MCF 10A (cell line): ENCODE measurements at regions of chr10 and their contacts with region 1.

Region 1: GRCh38 chr10:132904181-132904819 is 38.1 kb downstream of the CFAP46 start:
- DNase-seq: peak; percentile 64
- H3K4me3 Mint-ChIP-seq: peak overlapping the region; percentile 77
- H3K27ac Mint-ChIP-seq: peak overlapping the region; percentile 86
- H3K4me1 Mint-ChIP-seq: peaks cover 22% of the 10 kb centered on the region
- H3K27me3 Mint-ChIP-seq: no peaks in the 10 kb centered on the region
- CTCF ChIP-seq: peak; percentile 96

Region 2: DNA sequence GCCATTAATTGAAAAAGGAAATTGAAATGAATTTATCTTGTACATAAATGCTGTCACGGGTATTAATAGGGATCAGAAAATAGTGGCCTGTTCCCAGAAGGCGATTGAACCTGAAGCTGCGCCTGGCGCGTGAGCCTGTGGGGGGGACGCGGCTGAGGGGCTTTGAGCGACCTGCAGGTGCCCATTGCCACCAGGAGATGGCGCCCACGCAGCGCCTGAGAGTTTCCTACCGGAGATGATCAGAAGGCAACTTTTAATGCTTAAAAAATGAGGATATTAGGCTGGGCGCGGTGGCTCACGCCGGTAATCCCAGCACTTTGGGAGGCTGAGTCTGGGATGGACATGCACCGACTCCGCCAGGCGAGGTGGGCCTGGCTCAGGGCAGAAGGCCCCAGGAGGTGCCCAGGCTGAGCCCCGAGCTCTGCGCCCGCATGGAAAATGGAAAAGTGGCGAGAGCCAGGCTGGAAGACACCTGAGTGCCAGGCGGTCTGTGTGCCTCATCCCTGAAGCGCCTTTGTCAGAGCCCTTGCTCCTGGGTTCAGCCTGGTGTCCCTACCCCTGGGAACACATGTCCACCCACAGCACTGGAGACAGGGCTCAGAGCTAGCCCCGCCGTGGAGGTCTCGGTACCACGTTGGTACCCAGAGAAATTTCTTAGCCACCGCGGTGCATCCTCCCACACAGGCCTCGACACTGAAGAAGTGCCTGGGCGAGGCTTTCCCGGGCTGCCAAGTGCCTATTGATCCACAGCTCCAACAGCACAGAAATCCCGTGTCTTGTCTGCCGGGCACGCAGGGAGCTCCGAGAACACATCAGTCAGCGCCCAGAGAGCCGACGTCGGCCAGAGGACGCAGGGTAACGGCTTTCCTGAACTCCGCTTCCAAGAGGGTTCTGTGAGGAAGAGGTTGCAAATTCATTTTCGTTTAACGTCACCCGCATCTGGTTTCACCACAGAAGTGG is 249.3 kb before region 1 on chr10:
- CTCF ChIA-PET with region 1: interaction called, 3 read pairs
- POLR2A ChIA-PET with region 1: no interaction called
- intact Hi-C with region 1: loop called (anchors 1 kb)
- DNase-seq: peak; percentile 58
- H3K4me3 Mint-ChIP-seq: no peak overlapping the region
- H3K27ac Mint-ChIP-seq: no peak overlapping the region
- H3K4me1 Mint-ChIP-seq: no peaks in the 10 kb centered on the region
- H3K27me3 Mint-ChIP-seq: no peaks in the 10 kb centered on the region
- CTCF ChIP-seq: peak; percentile 97

Region 3: GRCh38 chr10:132836832-132837540 is 67.3 kb before region 1 on chr10:
- CTCF ChIA-PET with region 1: interaction called, 7 read pairs
- POLR2A ChIA-PET with region 1: no interaction called
- intact Hi-C with region 1: loop called (anchors 2 kb)
- DNase-seq: peak; percentile 10
- H3K4me3 Mint-ChIP-seq: no peak overlapping the region
- H3K27ac Mint-ChIP-seq: no peak overlapping the region
- H3K4me1 Mint-ChIP-seq: no peaks in the 10 kb centered on the region
- H3K27me3 Mint-ChIP-seq: peaks cover 35% of the 10 kb centered on the region
- CTCF ChIP-seq: peak; percentile 95

Region 4: DNA sequence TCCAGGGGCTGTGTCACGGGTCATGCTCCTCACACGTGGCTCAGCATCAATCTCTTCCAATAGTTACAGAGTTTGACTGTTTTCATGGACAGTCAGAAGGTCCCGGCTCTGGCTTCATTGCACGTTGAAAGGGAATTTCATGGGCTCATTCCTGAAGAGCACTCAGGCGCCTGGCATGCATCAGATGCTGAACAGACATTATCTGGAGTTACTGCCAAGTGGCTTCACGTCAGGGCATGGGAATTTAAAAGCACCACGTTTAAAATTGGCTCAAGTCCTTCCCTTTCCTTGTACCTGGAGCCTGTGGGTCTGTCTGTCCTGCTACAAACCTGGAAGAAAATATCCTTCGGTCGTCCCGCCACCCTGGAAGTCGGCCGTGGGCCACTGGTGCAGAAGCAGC is 12.3 kb before region 1 on chr10:
- CTCF ChIA-PET with region 1: interaction called, 12 read pairs
- POLR2A ChIA-PET with region 1: interaction called, 3 read pairs
- intact Hi-C with region 1: no loop called
- DNase-seq: no peak
- H3K4me3 Mint-ChIP-seq: no peak overlapping the region
- H3K27ac Mint-ChIP-seq: no peak overlapping the region
- H3K4me1 Mint-ChIP-seq: no peaks in the 10 kb centered on the region
- H3K27me3 Mint-ChIP-seq: peaks cover 51% of the 10 kb centered on the region
- CTCF ChIP-seq: no peak

Region 5: GRCh38 chr10:133000648-133001047 is 96.3 kb after region 1 on chr10:
- CTCF ChIA-PET with region 1: no interaction called
- POLR2A ChIA-PET with region 1: no interaction called
- intact Hi-C with region 1: no loop called
- DNase-seq: no peak
- H3K4me3 Mint-ChIP-seq: no peak overlapping the region
- H3K27ac Mint-ChIP-seq: no peak overlapping the region
- H3K4me1 Mint-ChIP-seq: no peaks in the 10 kb centered on the region
- H3K27me3 Mint-ChIP-seq: peaks cover 16% of the 10 kb centered on the region
- CTCF ChIP-seq: no peak

Region 6: GRCh38 chr10:133257489-133258065 is 353.3 kb after region 1 on chr10:
- CTCF ChIA-PET with region 1: interaction called, 12 read pairs
- POLR2A ChIA-PET with region 1: interaction called, 4 read pairs
- intact Hi-C with region 1: loop called (anchors 1 kb)
- DNase-seq: peak; percentile 87
- H3K4me3 Mint-ChIP-seq: peak overlapping the region; percentile 44
- H3K27ac Mint-ChIP-seq: peak overlapping the region; percentile 4
- H3K4me1 Mint-ChIP-seq: peaks cover 33% of the 10 kb centered on the region
- H3K27me3 Mint-ChIP-seq: no peaks in the 10 kb centered on the region
- CTCF ChIP-seq: peak; percentile 40

Region 7: DNA sequence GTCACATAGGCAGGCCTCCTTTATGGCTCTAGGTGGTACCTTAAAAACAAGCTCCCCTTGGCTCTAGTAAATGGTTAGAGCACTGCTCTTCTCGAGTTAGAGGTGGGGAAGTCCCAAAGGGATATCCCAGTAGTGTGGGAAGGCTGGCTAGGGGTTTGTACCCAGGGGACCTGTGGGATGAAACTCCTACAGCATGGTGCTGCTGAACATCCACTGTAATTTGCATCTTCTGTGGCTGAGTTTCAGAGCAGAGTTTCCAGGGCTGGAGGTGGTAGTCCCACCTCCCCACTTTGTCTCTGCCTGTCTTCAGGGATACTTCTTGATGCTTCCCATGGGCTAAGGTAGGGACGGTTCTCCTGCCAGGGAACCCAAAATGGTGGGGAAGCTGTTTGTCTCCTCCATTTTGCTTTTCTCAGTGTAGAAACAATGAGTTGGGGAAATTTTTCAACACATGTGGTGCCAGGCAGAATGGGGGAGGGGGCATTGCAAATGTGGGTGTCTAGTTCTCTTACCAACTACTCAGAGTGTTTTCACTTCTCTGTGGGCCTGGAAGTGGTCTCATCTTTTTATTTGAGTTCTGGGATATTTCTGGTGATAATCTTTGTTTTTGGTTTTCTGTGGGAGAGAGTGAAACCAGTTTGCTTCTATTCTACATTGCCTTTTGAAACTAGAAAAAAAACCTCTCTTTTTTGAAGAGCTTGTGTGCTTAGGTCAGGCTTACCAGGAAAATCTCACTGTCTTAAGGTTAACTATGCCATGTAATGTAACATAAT is 585.7 kb after region 1 on chr10:
- CTCF ChIA-PET with region 1: no interaction called
- POLR2A ChIA-PET with region 1: no interaction called
- intact Hi-C with region 1: loop called (anchors 5 kb)
- DNase-seq: no peak
- H3K4me3 Mint-ChIP-seq: no peak overlapping the region
- H3K27ac Mint-ChIP-seq: no peak overlapping the region
- H3K4me1 Mint-ChIP-seq: no peaks in the 10 kb centered on the region
- H3K27me3 Mint-ChIP-seq: no peaks in the 10 kb centered on the region
- CTCF ChIP-seq: no peak

Region 8: GRCh38 chr10:133520155-133520738 is 615.9 kb after region 1 on chr10:
- CTCF ChIA-PET with region 1: no interaction called
- POLR2A ChIA-PET with region 1: no interaction called
- intact Hi-C with region 1: loop called (anchors 10 kb)
- DNase-seq: peak; percentile 58
- H3K4me3 Mint-ChIP-seq: peak overlapping the region; percentile 14
- H3K27ac Mint-ChIP-seq: no peak overlapping the region
- H3K4me1 Mint-ChIP-seq: no peaks in the 10 kb centered on the region
- H3K27me3 Mint-ChIP-seq: peaks cover 44% of the 10 kb centered on the region
- CTCF ChIP-seq: peak; percentile 58